Activated T-helper 1 cell treated with anti-CD3 and anti-CD28 coated beads, Interleukin-12 subunit alpha, Interleukin-12 subunit beta, Interleukin-2, Interleukin-4 antibody, amounts not matched to agents 30 ng/mL and 10 ng/mL and 1 ng/mL, durations not matched to agents 14 hours and 24 hours and 36 hours (primary cell): ENCODE measurements at regions of chr15 and their contacts with region 1.

Region 1: DNA sequence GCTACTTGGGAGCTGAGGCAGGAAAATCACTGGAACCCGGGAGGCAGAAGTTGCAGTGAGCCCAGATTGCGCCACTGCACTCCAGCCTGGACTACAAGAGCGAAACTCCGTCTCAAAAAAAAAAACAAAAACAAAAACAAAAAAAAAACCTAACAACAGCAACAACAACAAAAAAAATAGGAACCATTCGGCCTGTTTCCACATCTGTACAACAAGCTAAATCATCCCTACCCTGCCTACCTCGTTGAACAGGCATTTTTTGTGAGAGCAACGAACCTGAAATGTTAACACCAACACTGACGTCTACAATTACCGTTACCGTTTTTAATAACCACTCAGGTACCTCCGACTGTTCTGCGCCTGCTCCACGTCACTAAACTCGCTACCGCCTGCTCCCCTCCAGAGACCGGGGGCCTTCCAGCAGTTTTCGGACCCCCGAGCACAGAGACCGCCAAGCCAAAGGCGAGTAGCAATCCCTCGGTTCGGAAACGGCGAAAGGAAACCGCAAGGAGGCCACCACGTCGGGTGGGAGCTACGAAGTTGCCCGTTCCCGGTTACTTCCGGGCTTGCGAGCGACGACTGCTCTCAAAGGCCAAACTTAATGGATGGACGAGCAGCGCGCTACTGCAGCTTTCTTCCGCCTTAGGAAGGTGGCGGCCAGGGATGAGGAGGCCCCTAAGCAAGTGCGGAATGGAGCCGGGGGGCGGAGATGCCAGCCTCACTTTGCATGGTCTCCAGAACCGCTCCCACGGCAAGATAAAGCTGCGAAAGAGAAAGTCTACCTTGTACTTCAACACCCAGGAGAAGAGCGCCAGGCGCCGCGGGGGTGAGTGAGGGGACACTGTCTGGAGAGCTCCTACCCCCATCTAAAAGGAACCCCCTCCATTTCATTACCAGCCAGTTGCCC is at the starts of genes PIGB and PIGBOS1:
- DNase-seq: peak; percentile 78
- H3K4me3 Mint-ChIP-seq: peak within 1 kb of the TSS; percentile 100
- H3K27ac Mint-ChIP-seq: peak within 1 kb of the TSS; percentile 99
- H3K4me1 Mint-ChIP-seq: peaks cover 63% of the 10 kb centered on the region
- H3K27me3 Mint-ChIP-seq: no peaks in the 10 kb centered on the region
- total RNA-seq, gene PIGB: 14.0 and 19.9 TPM in 2 replicates
- total RNA-seq, gene PIGBOS1: 10.3 and 11.8 TPM in 2 replicates

Region 2: DNA sequence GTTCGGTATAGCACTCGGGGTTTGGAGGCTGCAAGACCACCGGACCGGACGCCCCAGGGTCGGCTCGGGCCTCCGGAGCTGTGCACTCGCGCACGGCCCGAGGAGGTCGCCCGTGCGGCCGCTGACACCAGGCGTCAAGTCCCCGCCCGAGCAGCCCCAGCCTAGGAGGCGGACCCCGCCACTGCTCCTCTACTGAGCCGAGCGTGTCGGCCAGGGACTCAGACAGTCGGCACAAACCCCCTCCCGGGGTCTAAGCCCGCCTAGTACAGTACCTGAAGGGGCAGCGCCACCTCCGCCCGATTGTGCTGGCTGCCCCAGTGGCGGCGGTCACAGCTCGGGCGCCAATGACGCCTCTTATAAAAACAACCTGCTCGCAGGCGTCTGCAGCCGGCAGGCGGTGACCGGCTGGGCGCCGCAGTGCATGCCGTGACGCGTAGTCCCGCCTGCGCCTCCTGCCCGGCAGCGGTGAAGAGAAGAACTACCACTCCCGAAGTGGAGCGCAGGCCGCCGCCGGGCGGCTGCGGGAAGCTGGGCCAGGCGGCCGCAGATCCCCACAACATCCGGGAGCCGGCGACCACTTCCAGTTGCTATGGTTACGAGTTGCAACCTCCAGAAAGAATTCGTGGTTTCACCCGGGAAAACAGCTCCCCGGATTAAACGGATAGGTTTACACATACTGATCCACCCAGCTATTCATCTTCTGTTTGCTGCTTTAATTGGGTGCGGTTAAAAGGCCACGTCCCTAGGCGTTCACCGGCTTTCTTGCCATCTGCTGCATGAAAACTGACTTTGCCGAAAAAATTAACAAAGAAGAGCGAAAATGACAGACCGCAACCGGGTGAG is 89.3 kb after region 1 on chr15 and contains the starts of genes CCPG1 and PIERCE2:
- intact Hi-C with region 1: loop called (anchors 1 kb)
- DNase-seq: peak; percentile 89
- H3K4me3 Mint-ChIP-seq: peak within 1 kb of the TSS; percentile 98
- H3K27ac Mint-ChIP-seq: peak within 1 kb of the TSS; percentile 95
- H3K4me1 Mint-ChIP-seq: peaks cover 26% of the 10 kb centered on the region
- H3K27me3 Mint-ChIP-seq: no peaks in the 10 kb centered on the region
- total RNA-seq, gene CCPG1: 15.0 TPM in 2 replicates
- total RNA-seq, gene PIERCE2: not detected in 2 replicates

Region 3: DNA sequence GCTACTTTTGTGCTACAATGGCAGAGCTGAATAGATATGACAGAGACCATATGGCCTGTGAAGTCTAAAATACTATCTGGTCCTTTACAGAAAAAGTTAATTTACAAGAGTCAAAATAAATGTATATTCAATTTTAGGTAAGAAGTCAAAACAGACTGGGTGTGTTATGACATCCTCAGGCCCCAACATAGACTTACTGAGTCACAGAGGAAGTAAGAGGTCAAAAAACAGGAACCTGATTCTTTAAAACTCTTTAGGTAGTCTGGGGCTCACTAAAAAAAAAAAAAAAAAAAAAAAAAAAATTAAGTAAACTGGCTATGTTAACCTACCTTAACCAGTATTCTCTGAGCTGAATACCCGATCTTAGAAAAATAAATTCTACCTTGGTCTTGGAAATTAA is 176.1 kb after region 1 on chr15:
- intact Hi-C with region 1: loop called (anchors 1 kb)
- DNase-seq: no peak
- H3K4me3 Mint-ChIP-seq: no peak overlapping the region
- H3K27ac Mint-ChIP-seq: no peak overlapping the region
- H3K4me1 Mint-ChIP-seq: peaks cover 7% of the 10 kb centered on the region
- H3K27me3 Mint-ChIP-seq: no peaks in the 10 kb centered on the region